ENCODE measurements at regions of chr9 and their contacts with region 1.

Region 1: DNA sequence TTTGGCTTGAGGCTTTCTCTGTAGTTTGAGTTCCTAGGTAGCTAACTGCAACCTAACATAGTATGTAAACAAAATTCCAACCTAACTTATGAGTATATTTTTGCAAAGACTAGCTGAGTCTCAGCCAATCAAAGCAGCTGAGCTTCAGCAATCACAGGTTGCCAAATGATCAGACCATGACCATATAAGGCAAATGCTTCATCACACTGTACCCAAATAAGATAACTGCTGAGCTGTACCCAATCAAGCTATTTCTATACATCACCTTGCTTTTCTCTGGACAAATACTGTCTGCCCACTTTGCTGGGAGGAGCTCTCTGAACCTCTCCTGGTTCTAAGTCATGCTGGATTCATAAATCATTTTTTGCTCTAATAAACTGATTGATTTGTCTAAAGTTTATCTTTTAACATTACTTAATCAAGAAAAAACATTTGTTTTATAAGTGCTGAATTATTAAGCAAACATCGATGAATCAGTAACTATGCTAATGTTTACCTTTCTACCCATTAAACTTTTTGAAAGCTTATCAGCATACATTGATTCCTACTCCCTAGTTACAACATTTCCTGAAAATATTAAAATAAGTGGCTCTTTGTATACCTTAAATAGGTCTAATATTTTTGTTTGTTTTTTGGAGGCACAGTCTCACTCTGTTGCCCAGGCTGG is 129.7 kb upstream of the PCA3 start:
- DNase-seq: no peak
- H3K4me3 ChIP-seq: no peak overlapping the region
- H3K27ac ChIP-seq: no peak overlapping the region
- H3K4me1 ChIP-seq: peaks cover 18% of the 10 kb centered on the region
- CTCF ChIP-seq: no peak

Region 2: DNA sequence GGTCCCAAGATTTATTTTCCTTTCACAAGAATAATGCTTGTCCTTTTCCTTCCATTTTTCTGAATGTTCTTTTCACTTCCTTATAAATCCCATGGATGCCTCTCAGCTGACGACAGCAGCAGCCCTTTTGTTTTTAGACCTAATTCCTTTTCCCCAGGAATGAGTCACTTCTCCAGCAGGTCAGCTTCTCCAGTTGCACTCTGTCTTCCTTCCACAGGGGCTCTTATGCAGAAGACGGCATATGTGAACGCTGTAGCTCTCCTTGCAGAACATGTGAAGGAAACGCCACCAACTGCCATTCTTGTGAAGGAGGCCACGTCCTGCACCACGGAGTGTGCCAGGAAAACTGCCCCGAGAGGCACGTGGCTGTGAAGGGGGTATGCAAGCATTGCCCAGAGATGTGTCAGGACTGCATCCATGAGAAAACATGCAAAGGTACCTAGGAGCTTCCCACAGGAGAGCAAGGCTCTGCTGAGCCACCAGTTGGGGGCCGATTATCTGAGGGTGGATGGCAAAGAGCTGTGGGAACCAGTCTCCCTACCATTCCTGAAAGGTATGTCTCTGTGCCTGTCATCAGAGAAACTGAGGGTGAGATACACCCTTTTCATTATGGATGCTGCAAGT is 313.2 kb before region 1 on chr9:
- CTCF ChIA-PET with region 1: no interaction called
- POLR2A ChIA-PET with region 1: no interaction called
- intact Hi-C with region 1: no loop called
- DNase-seq: no peak
- H3K4me3 ChIP-seq: no peak overlapping the region
- H3K27ac ChIP-seq: no peak overlapping the region
- H3K4me1 ChIP-seq: no peaks in the 10 kb centered on the region
- CTCF ChIP-seq: no peak

Region 3: GRCh38 chr9:76615177-76615603 is 19.3 kb before region 1 on chr9:
- CTCF ChIA-PET with region 1: interaction called, 3 read pairs
- POLR2A ChIA-PET with region 1: interaction called, 17 read pairs
- intact Hi-C with region 1: no loop called
- DNase-seq: no peak
- H3K4me3 ChIP-seq: no peak overlapping the region
- H3K27ac ChIP-seq: no peak overlapping the region
- H3K4me1 ChIP-seq: no peaks in the 10 kb centered on the region
- CTCF ChIP-seq: no peak